Right ventricle myocardium superior (tissue), 1 donor: ENCODE measurements at regions of chr1 and their contacts with region 1.

Region 1: DNA sequence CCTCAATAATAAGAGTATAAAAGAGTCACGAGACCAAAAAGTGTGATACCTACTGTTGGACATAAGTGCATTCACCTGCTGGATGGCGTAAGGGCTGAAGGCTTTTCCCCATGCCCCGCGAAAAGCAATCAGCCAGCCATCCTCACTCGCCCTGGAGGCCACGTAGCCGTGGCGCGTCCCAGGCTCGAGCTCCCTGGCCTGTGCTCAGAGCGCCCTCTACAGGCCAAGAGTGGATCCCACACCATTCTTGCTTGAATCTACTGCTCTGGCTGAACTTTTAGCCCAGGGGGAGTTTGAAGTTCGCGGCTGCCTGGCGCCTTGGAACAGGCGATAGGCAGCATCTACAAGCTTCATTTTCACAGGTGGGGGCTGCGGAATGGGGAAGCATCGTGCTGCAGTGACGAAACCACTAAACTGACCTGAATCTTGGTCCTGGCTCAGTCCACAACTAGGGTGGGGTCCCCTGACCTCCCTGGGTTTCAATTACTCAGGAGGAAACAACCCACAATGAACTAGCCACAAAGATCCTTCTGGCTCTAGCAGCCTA is 70.3 kb upstream of the SERBP1 start:
- DNase-seq: peak; percentile 90
- ATAC-seq: peak; percentile 98

Region 2: DNA sequence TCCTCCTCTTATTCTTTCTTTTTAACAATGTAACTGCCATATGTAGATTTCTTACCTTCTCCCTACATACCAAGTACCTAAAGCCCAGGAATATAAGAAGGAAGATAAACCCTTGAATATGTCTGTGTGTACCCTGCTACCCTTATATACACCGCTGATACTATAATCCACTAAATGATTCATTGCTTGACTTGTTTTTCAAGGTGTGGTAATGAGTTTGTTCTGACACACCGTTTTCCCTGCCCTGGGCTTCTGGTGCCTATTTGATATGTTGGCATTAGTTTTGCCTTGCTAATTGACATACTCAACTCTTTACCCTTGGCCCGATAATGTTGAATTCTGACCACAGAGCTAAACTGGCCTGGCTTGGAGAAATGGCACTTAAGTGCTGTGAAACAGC is 269.9 kb before region 1 on chr1:
- intact Hi-C with region 1: loop called (anchors 5 kb)
- DNase-seq: no peak
- ATAC-seq: no peak

Region 3: DNA sequence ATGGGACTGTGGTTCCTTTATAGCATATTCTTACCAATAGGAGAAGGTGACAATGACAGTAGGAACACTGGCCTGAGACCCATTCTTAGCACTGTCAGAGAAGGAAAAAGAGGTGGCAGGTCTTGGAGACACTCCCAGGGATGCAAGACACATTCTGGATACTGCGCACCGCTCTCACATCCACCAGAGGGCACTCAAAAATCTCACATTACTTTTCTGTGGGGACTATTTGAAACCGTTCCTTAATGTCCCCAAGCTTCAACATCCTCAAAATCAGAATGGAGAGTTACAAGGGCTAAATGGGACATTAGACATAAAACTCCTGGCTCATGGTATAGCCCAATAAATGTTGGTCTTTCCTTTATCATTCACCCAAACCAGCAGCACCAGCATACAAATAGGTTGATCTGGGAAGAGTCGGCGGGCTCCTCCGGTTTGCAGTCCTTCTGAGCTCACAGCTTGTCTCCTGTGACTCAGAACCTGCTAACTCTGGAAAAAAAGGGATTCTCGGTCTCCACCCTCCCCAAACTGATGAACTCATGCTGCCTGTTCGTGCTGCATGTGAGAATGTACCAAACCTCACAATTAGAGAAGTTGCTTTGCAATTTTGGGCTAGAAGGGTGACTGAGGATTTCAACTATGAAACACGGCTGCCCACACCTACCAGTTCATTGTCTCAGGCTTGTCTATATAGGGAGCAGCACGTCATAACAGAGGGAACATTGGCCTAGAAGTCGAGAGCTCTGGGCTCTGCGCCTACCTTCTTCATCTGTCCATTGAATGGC is 152.6 kb before region 1 on chr1:
- intact Hi-C with region 1: loop called (anchors 5 kb)
- DNase-seq: no peak
- ATAC-seq: peak; percentile 86

Region 4: DNA sequence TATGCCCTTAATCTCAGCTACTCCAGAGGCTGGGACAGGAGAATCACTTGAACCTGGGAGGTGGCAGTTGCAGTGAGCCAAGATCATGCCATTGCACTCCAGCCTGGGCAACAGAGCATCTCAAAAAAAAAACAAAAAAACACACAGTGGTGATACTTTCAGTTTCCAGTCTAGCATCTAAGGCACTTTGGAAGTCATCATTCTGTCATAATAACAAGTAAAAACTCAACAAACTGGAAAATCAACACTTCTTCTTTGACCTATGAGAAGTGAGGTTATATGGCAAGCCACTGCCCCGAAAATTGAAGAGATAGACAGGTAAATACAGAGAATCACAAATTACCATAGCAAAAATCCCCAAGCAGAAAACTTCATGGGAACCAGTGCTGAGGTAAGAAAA is 140.9 kb before region 1 on chr1:
- intact Hi-C with region 1: no loop called
- DNase-seq: no peak
- ATAC-seq: no peak

Region 5: GRCh38 chr1:67393240-67393639 is 107.2 kb before region 1 on chr1:
- intact Hi-C with region 1: no loop called
- DNase-seq: peak; percentile 44
- ATAC-seq: peak; percentile 82

Region 6: GRCh38 chr1:67404212-67404620 is 96.3 kb before region 1 on chr1:
- intact Hi-C with region 1: no loop called
- DNase-seq: no peak
- ATAC-seq: no peak

Region 7: DNA sequence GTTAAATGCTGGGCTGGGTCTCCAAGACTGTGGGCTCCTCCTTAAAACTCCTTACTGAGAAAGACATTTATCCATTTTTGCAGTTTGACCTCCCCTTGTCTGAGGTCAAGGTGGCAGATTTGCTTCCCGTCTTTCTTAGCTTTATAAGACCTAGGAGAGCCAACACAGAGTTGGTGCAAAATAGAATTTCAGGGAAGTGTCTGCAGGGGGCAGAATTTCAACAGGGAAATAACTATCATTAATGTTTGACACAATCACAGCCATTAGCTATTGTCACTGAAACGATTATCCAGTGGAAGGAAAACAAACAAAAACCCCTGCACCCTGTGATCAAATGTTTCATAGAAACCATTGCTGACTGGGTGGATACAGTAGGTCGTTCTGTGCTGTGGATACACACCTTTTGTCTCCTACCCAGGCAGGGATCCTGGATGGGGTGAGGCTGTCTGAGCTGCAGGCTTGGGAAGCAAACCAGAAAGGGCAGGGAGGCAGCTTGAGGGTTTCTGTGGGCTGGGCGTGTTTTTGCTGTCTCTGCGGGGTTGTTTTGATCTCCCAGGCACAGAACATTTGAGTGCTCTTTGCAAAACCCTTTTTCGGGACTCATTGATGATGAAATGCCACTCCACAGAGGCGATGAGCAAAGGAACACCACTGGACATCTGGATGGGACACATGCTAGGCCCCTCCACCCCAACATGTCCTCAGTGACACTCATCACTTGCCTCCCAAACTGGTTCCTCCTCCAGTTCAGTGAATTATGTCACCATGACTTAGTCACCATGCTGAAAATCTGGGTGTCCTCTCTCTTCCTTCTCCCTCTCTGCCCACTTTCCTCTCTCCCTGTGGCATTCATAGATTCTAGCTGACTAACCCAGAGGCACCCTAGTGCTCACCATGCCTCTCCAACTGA is 23.9 kb after region 1 on chr1:
- intact Hi-C with region 1: no loop called
- DNase-seq: no peak
- ATAC-seq: no peak